ENCODE measurements at regions of chr17 and their contacts with region 1.

Region 1: GRCh38 chr17:79082311-79083190 is 7.9 kb downstream of the ENGASE start:
- DNase-seq: peak; percentile 64
- H3K4me3 Mint-ChIP-seq: no peak overlapping the region
- H3K27ac Mint-ChIP-seq: no peak overlapping the region
- H3K4me1 Mint-ChIP-seq: peaks cover under 1% of the 10 kb centered on the region
- H3K27me3 Mint-ChIP-seq: no peaks in the 10 kb centered on the region

Region 2: DNA sequence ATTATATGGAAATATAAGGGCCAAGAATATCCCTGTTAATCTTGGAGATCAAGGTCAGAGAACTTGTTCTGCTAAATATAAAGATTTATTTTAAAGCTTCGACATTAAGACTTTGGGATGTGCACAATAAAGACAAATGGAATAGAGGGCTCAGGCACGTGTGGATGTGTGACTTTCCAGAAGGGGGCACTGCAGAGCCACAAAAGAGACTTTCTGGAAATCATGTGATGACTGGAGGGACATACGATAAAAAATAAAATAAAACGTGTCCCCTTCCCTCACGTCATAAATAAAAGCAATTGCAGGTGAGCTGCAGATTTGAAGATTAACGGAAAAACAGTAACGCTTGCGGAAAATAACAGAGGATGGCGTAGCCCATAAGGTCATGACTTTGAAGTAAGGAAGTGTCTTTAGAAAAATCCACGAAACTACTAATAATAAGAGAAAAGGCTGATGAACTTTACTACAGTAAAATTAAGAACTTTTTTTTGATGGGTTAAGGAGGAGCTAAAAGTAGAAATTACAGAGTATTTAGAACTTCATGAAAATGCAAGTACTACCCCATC is 17.4 kb before region 1 on chr17:
- CTCF ChIA-PET with region 1: interaction called, 19 read pairs
- intact Hi-C with region 1: no loop called
- DNase-seq: peak; percentile 80
- H3K4me3 Mint-ChIP-seq: no peak overlapping the region
- H3K27ac Mint-ChIP-seq: no peak overlapping the region
- H3K4me1 Mint-ChIP-seq: peaks cover 3% of the 10 kb centered on the region
- H3K27me3 Mint-ChIP-seq: no peaks in the 10 kb centered on the region